Right ventricle myocardium inferior (tissue), 1 donor: ENCODE measurements at regions of chr10 and their contacts with region 1.

Region 1: DNA sequence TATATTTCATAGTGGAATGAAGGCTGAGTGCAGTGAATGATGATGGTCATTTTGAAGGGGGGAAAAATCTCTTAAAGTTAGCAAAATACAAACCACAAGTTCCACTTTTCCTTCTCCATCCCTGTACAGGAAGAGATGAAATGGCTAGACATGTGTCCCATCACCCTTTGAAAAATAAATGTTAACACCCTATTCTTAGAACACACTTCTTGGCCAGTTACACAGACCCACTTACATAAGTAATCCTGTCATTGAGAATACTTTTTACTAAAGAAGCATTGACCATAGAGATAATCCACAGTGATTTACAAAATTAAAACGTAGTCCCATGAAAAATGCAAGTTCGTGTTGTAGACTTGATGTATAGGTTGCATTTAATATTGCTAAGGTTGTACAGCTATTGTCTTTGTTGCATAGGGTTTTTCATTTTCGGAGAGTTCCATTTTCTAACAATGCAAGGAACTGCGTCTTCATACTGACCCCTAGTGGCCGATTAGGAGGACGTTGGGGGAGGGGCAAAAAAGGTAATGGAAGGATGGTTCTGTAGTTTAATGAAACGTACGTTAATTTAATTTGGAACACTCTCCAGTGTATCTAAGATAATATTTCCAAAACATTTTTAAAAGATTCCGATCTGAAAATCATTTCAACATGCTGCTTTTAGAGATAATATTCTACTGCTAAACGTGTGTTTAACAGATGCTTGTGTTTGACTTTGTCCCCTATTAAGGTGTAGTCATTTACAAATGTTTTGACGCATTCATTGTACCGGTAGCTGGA is 60.9 kb downstream of the ARMC3 start:
- DNase-seq: no peak
- ATAC-seq: peak; percentile 76

Region 2: GRCh38 chr10:21989453-21990154 is 999.2 kb before region 1 on chr10:
- intact Hi-C with region 1: loop called (anchors 5 kb)
- DNase-seq: peak; percentile 56
- ATAC-seq: peak; percentile 92

Region 3: GRCh38 chr10:22010973-22011408 is 977.8 kb before region 1 on chr10:
- intact Hi-C with region 1: loop called (anchors 2 kb)
- DNase-seq: no peak
- ATAC-seq: no peak

Region 4: GRCh38 chr10:22340362-22341189 is 648.2 kb before region 1 on chr10:
- intact Hi-C with region 1: loop called (anchors 10 kb)
- DNase-seq: peak; percentile 84
- ATAC-seq: peak; percentile 83

Region 5: DNA sequence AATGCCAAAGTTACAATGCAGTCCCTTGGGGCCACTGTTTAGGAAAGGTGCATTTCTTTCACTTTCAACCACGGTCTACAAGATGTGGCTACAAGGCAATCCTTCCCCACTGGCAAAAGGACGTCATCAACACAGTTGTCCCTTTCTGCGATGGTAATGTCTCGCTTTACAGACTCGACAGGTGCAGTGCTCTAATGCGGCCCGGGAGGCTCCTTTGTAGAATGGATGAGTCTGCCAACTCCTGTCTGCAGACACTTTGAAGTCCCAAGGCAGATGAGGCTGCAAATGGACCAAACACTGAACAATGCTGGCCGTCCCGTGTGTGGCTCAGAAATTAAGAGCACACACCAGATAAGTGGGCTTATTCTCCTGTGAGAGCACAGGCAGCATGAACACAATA is 408.1 kb before region 1 on chr10:
- intact Hi-C with region 1: loop called (anchors 10 kb)
- DNase-seq: no peak
- ATAC-seq: no peak

Region 6: GRCh38 chr10:22854935-22855421 is 133.8 kb before region 1 on chr10:
- intact Hi-C with region 1: loop called (anchors 5 kb)
- DNase-seq: no peak
- ATAC-seq: peak; percentile 86

Region 7: DNA sequence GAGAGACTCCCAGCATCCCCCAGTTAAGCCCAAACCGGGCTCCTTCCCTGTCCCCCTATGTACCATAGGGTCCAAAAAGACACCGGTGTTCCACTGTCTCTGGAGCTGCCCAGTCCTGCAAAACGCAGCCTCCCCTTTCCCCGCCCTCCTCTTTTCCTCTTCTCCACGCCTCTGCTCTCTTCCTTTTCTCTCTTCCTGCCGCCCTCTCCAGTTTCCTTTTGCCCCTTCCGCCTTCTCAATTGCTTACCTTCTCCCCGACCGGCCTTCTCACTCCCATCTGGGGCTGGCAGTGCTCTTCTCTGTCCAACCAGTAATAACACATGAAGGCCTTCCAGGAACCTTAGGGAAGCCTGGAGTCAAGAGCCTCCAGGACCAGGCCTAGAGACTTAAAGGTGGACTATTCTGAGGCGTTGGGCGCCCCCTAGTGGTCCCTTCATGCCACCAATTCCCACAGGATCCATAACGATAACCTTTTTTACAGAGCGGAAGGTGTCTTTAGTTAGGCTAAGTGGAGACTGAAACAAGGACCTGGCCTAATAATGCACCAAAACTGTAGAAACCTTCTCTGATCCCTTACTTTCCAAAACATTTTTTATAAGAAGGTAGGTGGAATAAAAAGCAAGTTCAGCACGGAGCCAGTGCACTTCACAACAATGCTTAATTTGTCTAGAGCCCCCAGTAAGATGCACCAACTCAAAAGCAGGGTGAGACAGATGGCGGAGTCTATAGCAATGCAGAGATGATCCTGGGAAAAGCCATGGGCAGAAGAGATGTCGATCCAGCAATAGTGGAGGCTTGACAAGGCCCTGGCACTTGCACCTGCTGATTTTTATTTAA is 79.4 kb after region 1 on chr10:
- intact Hi-C with region 1: loop called (anchors 2 kb)
- DNase-seq: peak; percentile 87
- ATAC-seq: peak; percentile 62